Tibial artery (tissue), 4 donors: ENCODE measurements at regions of chr10 and their contacts with region 1.

Region 1: GRCh38 chr10:86942443-86943075 is 14.9 kb downstream of the MMRN2 start:
- DNase-seq: peak; percentile 18 to 75
- H3K4me3 ChIP-seq: peak overlapping the region; percentile 28 to 30
- H3K27ac ChIP-seq: peak overlapping the region; percentile 33 to 67
- H3K4me1 ChIP-seq: peaks cover 3 to 65% (median 34%) of the 10 kb centered on the region in 4 donors
- H3K27me3 ChIP-seq: no peaks in the 10 kb centered on the region
- CTCF ChIP-seq: no peak

Region 2: DNA sequence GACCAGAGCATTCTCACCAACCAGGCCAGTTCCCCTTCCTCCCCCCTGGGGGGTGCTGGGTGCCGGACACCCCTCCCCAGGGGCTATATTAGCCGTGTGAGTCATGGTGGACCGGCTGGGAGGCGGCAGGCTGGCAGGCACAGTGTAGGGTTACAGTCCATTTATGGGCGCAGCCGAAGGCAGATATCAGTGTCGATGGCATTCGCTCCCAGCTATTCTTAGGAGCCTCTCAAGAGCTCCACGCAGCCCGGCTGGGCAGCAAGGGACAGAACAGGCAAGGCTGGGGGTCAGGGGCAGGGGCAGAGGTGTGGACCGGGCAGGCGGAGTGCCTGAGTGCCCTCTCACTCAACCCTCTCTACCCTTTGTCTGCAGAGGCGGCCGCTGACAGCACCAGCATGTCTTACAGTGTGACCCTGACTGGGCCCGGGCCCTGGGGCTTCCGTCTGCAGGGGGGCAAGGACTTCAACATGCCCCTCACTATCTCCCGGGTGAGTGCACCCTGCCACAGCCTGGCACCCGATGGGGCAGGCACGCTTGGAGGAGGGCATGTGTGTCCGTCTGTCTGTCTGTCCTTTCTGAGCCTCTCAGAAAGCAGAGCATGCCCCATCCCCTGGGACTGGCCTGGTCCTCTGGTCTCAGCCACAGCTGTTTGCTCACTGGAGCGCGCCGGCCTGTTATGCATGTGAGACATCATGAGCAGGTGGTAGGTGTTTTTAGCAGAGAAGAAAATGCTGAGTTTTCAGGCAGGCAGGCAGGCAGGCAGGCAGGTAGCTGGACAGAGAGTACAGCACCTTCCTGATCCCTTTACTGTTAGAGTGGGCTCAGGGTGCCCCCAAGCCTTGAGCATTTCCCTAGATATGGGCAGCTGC is 274.0 kb before region 1 on chr10 and contains the start of gene LDB3:
- intact Hi-C with region 1: no loop called
- DNase-seq: peak; percentile 80 to 96
- H3K4me3 ChIP-seq: peak within 1 kb of the TSS; percentile 51 to 61
- H3K27ac ChIP-seq: peak within 1 kb of the TSS; percentile 81 to 89
- H3K4me1 ChIP-seq: peaks cover 0 to 80% (median 62%) of the 10 kb centered on the region in 4 donors
- H3K27me3 ChIP-seq: no peaks in the 10 kb centered on the region
- CTCF ChIP-seq: no peak

Region 3: GRCh38 chr10:86931872-86932271 is 10.7 kb before region 1 on chr10:
- intact Hi-C with region 1: no loop called
- DNase-seq: no peak
- H3K4me3 ChIP-seq: no peak overlapping the region
- H3K27ac ChIP-seq: peak overlapping the region; percentile 0 to 32
- H3K4me1 ChIP-seq: peaks cover 0 to 42% (median 9%) of the 10 kb centered on the region in 4 donors
- H3K27me3 ChIP-seq: no peaks in the 10 kb centered on the region
- CTCF ChIP-seq: no peak

Region 4: GRCh38 chr10:86960003-86960862 is 17.7 kb after region 1 on chr10:
- intact Hi-C with region 1: loop called (anchors 2 kb)
- DNase-seq: peak; percentile 50 to 84
- H3K4me3 ChIP-seq: peak overlapping the region; percentile 49 to 50
- H3K27ac ChIP-seq: peak overlapping the region; percentile 91 to 94
- H3K4me1 ChIP-seq: peaks cover 5 to 78% (median 74%) of the 10 kb centered on the region in 4 donors
- H3K27me3 ChIP-seq: no peaks in the 10 kb centered on the region
- CTCF ChIP-seq: peak; percentile 99